ENCODE measurements at regions of chr1 and their contacts with region 1.

Region 1: DNA sequence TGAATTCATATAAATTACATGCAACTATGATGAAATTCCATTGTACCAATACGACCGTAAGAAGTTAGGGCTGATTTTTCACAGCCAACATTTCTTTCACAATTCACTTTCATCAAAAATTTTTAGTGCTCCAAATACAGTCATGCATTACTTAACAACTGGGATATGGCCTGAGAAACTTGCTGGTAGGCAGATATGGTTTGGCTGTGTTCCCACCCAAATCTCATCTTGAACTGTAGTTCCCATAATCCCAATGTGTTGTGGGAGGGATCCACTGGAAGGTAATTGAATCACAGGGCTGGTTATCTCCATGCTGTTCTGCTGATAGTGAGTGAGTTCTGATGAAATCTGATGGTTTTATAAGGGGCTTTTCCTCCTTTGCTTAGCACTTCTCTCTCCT is 244.4 kb downstream of the AKT3 start:
- DNase-seq: no peak
- H3K4me3 Mint-ChIP-seq: no peak overlapping the region
- H3K27ac Mint-ChIP-seq: peak overlapping the region; percentile 16
- H3K4me1 Mint-ChIP-seq: no peaks in the 10 kb centered on the region
- H3K27me3 Mint-ChIP-seq: no peaks in the 10 kb centered on the region
- CTCF ChIP-seq: no peak

Region 2: GRCh38 chr1:242081446-242081845 is 1524.2 kb before region 1 on chr1:
- CTCF ChIA-PET with region 1: no interaction called
- intact Hi-C with region 1: no loop called
- DNase-seq: no peak
- H3K4me3 Mint-ChIP-seq: no peak overlapping the region
- H3K27ac Mint-ChIP-seq: no peak overlapping the region
- H3K4me1 Mint-ChIP-seq: no peaks in the 10 kb centered on the region
- H3K27me3 Mint-ChIP-seq: peaks cover 16% of the 10 kb centered on the region
- CTCF ChIP-seq: no peak

Region 3: DNA sequence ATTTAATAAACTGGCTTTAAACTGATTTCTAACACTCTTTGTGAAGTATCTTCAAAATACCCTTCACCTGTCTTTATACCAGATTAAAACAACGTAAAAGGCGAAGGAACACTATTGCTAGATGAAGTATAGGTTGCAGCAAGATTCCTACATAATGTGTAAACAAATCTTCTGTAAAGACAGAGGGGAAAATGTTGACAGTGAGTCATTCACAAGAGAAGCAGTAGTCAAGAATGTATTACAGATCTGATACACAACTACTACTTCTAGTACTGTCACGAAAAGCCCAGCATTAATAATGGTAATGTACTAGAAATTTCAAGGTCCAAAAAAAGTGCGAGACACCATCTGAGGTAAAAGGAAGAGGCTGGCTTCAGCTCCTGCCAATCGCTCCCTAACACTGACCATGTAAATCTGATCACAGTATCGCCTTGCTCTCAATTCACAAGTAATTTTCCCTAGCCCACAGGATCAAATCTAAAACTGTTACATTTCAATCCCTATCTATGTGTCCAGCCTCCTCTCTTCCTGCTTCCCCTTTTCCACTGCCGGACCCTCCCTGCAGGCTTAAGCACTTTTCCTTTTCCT is 45.9 kb before region 1 on chr1:
- CTCF ChIA-PET with region 1: no interaction called
- intact Hi-C with region 1: loop called (anchors 1 kb)
- DNase-seq: no peak
- H3K4me3 Mint-ChIP-seq: no peak overlapping the region
- H3K27ac Mint-ChIP-seq: no peak overlapping the region
- H3K4me1 Mint-ChIP-seq: no peaks in the 10 kb centered on the region
- H3K27me3 Mint-ChIP-seq: no peaks in the 10 kb centered on the region
- CTCF ChIP-seq: no peak